Tibial artery (tissue), 4 donors: ENCODE measurements at regions of chr9 and their contacts with region 1.

Region 1: GRCh38 chr9:109119439-109120203 is at the start of gene TMEM245:
- DNase-seq: peak; percentile 97 to 99
- H3K4me3 ChIP-seq: peak within 1 kb of the TSS; percentile 89 to 96
- H3K27ac ChIP-seq: peak within 1 kb of the TSS; percentile 90 to 97
- H3K4me1 ChIP-seq: peaks cover 0 to 44% (median 30%) of the 10 kb centered on the region in 4 donors
- H3K27me3 ChIP-seq: no peaks in the 10 kb centered on the region
- CTCF ChIP-seq: no peak

Region 2: DNA sequence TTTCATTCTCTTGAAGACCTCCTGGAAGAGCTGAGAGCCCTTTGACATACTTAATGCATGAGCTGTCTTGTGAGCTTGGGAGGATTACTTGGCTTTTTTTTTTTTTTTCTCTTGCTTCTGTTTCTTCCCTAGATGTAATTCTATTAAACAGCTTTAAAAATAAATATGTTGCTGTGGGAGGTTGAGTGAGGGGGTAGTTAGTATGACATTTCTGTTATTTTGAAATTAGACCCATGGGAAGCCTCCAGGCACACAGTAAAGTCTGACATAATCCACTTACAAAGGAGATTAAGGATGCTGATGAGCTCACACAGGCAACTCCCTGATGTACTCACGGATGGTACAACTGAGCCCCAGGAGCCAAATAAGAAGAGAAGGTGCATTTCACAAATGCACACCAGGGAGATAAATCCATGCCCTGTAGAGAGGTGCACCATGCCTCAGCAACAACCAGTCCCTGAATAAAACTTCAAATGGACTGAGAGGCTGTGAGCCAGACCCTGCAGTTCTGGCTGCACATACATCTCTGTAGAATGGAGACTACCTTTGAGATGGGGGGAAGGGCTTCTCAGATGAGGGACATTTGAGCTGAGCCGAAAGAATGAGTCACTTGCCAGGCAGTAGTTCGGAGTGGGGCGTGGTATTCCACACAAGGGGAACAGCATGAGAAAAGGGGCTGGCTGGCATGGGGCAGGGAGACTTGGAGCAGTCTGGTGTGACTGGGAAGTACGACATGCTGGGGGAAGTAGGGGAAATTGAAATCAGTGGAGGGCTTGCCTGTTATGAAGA is 332.5 kb before region 1 on chr9:
- intact Hi-C with region 1: no loop called
- DNase-seq: no peak
- H3K4me3 ChIP-seq: no peak overlapping the region
- H3K27ac ChIP-seq: no peak overlapping the region
- H3K4me1 ChIP-seq: peaks cover 0 to 18% (median 3%) of the 10 kb centered on the region in 4 donors
- H3K27me3 ChIP-seq: no peaks in the 10 kb centered on the region
- CTCF ChIP-seq: no peak

Region 3: GRCh38 chr9:108933718-108934322 is 185.8 kb before region 1 on chr9 and contains the start of gene ELP1:
- intact Hi-C with region 1: loop called (anchors 10 kb)
- DNase-seq: peak; percentile 90 to 94
- H3K4me3 ChIP-seq: peak within 1 kb of the TSS; percentile 71 to 76
- H3K27ac ChIP-seq: peak within 1 kb of the TSS; percentile 83 to 86
- H3K4me1 ChIP-seq: peaks cover 0 to 25% (median 18%) of the 10 kb centered on the region in 4 donors
- H3K27me3 ChIP-seq: no peaks in the 10 kb centered on the region
- CTCF ChIP-seq: no peak

Region 4: GRCh38 chr9:109012876-109013678 is 106.5 kb before region 1 on chr9 and contains the start of gene CTNNAL1:
- intact Hi-C with region 1: loop called (anchors 5 kb)
- DNase-seq: peak; percentile 95 to 98
- H3K4me3 ChIP-seq: peak within 1 kb of the TSS; percentile 72 to 77
- H3K27ac ChIP-seq: peak within 1 kb of the TSS; percentile 91 to 97
- H3K4me1 ChIP-seq: peaks cover 0 to 38% (median 28%) of the 10 kb centered on the region in 4 donors
- H3K27me3 ChIP-seq: no peaks in the 10 kb centered on the region
- CTCF ChIP-seq: no peak

Region 5: GRCh38 chr9:109074236-109074889 is 45.3 kb before region 1 on chr9:
- intact Hi-C with region 1: no loop called
- DNase-seq: no peak
- H3K4me3 ChIP-seq: no peak overlapping the region
- H3K27ac ChIP-seq: no peak overlapping the region
- H3K4me1 ChIP-seq: no peaks in the 10 kb centered on the region
- H3K27me3 ChIP-seq: no peaks in the 10 kb centered on the region
- CTCF ChIP-seq: no peak